CD8-positive, alpha-beta T cell (primary cell): ENCODE measurements at regions of chr6 and their contacts with region 1.

Region 1: GRCh38 chr6:53544470-53545308 is at the start of gene GCLC:
- DNase-seq: peak; percentile 75 to 95 (median 87)
- ATAC-seq: peak; percentile 67
- H3K4me3 ChIP-seq: peak within 1 kb of the TSS; percentile 69 to 79
- H3K4me3 Mint-ChIP-seq: peak within 1 kb of the TSS; percentile 99
- H3K27ac ChIP-seq: peak within 1 kb of the TSS; percentile 48 to 62
- H3K27ac Mint-ChIP-seq: peak within 1 kb of the TSS; percentile 89
- H3K4me1 ChIP-seq: peaks cover 39% of the 10 kb centered on the region
- H3K4me1 Mint-ChIP-seq: peaks cover 68% of the 10 kb centered on the region
- H3K27me3 ChIP-seq: no peaks in the 10 kb centered on the region
- H3K27me3 Mint-ChIP-seq: no peaks in the 10 kb centered on the region
- CTCF ChIP-seq: peak; percentile 80
- total RNA-seq, gene GCLC: 13.1 to 13.6 TPM

Region 2: DNA sequence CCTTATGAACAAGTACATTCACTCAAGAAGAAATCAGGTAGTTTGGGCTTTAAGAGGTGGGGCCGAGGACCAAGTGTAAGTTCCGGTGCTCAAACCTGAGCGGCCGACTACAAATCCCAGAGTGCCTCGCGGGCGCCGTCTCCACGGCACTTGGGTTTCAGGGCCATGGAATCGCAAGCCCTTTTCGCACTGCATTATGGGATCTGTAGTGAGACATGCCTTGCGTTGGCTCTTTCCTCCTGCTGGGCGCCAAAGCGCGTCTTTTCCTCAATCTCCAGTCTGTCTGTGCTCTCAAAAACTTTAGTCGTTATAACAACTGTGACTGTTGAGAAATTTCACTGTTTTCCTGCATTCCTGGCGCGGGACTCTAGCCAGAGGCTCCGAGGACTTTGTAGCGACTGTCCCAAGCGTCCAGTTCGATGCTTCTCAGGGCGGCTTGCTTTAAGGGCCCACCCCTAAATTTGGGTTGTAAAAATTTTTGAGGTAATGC is 479.9 kb before region 1 on chr6:
- CTCF ChIA-PET with region 1: no interaction called
- POLR2A ChIA-PET with region 1: no interaction called
- intact Hi-C with region 1: loop called (anchors 2 kb)
- DNase-seq: peak; percentile 90 to 98 (median 96)
- ATAC-seq: peak; percentile 83
- H3K4me3 ChIP-seq: peak overlapping the region; percentile 79 to 83
- H3K4me3 Mint-ChIP-seq: peak overlapping the region; percentile 100
- H3K27ac ChIP-seq: peak overlapping the region; percentile 55 to 81
- H3K27ac Mint-ChIP-seq: peak overlapping the region; percentile 98
- H3K4me1 ChIP-seq: peaks cover 39% of the 10 kb centered on the region
- H3K4me1 Mint-ChIP-seq: peaks cover 60% of the 10 kb centered on the region
- H3K27me3 ChIP-seq: no peaks in the 10 kb centered on the region
- H3K27me3 Mint-ChIP-seq: no peaks in the 10 kb centered on the region
- CTCF ChIP-seq: no peak

Region 3: DNA sequence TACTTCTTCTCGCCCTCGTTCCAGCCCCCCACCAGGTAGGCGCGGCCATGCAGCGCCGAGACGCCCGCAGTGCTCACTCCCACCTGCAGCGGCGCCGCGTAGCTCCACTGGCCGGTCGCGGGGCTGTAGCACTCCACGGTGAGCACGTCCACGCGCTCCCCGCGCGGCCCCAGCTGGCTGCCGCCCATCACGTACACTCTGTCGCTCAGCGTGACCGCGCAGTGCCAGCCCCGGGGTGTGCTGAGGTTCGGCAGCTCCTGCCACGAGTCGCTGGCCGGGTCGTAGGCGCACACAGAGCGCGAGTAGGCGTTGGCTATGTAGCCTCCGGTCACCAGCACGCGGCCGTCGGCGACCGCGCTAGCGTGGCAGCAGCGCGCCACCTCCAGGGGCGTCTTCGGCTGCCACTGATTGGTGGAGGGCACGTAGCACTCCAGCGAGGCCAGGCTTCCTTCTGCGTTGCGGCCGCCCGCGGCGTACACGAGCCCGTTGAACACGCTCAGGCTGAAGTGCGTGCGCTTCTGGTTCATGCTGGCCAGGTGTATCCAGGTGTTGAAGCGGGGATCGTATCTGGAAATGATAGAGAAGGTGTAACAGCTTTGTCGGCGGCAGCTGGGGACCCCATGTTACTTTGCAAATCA is 107.2 kb after region 1 on chr6:
- CTCF ChIA-PET with region 1: interaction called, 18 read pairs
- POLR2A ChIA-PET with region 1: interaction called, 18 read pairs
- intact Hi-C with region 1: loop called (anchors 1 kb)
- DNase-seq: peak; percentile 57 to 91 (median 79)
- ATAC-seq: peak; percentile 86
- H3K4me3 ChIP-seq: peak overlapping the region; percentile 67 to 81
- H3K4me3 Mint-ChIP-seq: peak overlapping the region; percentile 91
- H3K27ac ChIP-seq: peak overlapping the region; percentile 54 to 65
- H3K27ac Mint-ChIP-seq: peak overlapping the region; percentile 89
- H3K4me1 ChIP-seq: peaks cover 32% of the 10 kb centered on the region
- H3K4me1 Mint-ChIP-seq: peaks cover 32% of the 10 kb centered on the region
- H3K27me3 ChIP-seq: no peaks in the 10 kb centered on the region
- H3K27me3 Mint-ChIP-seq: no peaks in the 10 kb centered on the region
- CTCF ChIP-seq: no peak

Region 4: DNA sequence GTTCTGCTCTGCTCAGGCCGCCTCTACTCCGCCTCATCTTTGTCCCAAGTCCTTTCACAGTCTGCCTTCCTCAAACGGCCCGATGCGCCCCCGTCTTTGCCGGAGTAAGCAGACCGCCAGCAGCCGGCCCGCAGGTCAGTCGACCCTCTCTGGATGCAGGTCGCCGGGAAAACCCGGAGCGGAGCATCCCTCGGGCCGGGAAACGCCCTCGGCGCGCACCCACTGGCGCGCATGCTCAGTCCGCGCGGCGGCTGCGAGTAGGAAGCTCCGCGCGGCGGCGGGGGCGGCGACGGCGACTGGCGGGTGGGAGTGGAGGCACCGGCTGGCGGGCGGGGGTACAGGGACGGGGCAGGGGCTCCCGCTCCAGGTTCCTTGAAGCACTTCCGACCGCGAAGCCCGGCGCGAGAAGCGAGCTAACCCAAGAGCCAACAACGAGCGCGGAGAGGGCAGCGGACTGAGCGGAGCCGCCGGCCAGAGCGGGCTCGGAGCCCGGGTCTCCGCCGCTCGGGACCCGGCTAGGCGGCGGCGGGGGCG is 250.1 kb after region 1 on chr6 and contains the start of gene LRRC1:
- CTCF ChIA-PET with region 1: no interaction called
- POLR2A ChIA-PET with region 1: interaction called, 5 read pairs
- intact Hi-C with region 1: loop called (anchors 1 to 5 kb)
- DNase-seq: peak; percentile 59 to 90 (median 82)
- ATAC-seq: peak; percentile 64
- H3K4me3 ChIP-seq: peak within 1 kb of the TSS; percentile 88
- H3K4me3 Mint-ChIP-seq: peak within 1 kb of the TSS; percentile 96
- H3K27ac ChIP-seq: peak within 1 kb of the TSS; percentile 41 to 46
- H3K27ac Mint-ChIP-seq: peak within 1 kb of the TSS; percentile 87
- H3K4me1 ChIP-seq: peaks cover 13% of the 10 kb centered on the region
- H3K4me1 Mint-ChIP-seq: peaks cover 27% of the 10 kb centered on the region
- H3K27me3 ChIP-seq: no peaks in the 10 kb centered on the region
- H3K27me3 Mint-ChIP-seq: peaks cover 19% of the 10 kb centered on the region
- CTCF ChIP-seq: no peak
- total RNA-seq, gene LRRC1: 0.47 to 0.87 TPM